ENCODE measurements at regions of chr6 and their contacts with region 1.

Region 1: GRCh38 chr6:125314019-125314581 is 12.3 kb upstream of the HDDC2 start:
- DNase-seq: peak; percentile 51 to 80 (median 77)
- ATAC-seq: peak; percentile 91 to 92
- H3K4me3 ChIP-seq: no peak overlapping the region
- H3K27ac ChIP-seq: no peak overlapping the region
- H3K4me1 ChIP-seq: no peaks in the 10 kb centered on the region
- H3K27me3 ChIP-seq: no peaks in the 10 kb centered on the region

Region 2: DNA sequence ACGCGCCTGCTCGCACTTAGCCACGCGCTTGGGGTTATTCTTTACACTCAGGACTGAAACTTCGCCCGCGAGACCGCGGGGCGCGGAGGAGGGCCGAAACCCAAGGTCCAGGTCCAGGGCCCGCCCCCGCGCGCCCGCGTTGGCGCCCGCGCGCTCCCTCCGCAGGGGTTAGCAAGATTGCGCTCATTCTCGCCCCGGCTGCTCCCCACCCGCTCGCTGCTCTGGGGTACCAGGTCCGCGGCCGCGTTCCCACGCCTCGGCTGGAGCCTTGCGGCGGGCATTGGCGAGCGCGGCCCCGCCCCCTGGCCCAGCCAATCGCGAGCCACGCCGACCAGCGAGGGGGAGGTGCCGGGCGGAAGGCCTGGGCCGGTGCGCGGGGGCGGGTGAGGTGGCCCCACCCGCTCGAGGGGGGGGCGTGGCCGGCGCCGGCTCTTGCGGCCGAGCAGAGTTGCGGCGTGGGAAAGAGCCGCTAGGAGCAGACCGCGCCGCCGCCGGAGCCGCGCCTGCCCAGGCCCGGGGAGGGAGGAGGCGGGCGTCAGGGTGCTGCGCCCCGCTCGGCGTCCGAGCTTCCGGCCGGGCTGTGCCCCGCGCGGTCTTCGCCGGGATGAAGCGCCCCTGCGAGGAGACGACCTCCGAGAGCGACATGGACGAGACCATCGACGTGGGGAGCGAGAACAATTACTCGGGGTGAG is 435.2 kb after region 1 on chr6 and contains the start of gene HEY2:
- intact Hi-C with region 1: loop called (anchors 5 kb)
- DNase-seq: peak; percentile 95 to 98 (median 98)
- ATAC-seq: peak; percentile 97 to 98
- H3K4me3 ChIP-seq: peak within 1 kb of the TSS; percentile 66
- H3K27ac ChIP-seq: peak within 1 kb of the TSS; percentile 78
- H3K4me1 ChIP-seq: no peaks in the 10 kb centered on the region
- H3K27me3 ChIP-seq: no peaks in the 10 kb centered on the region
- total RNA-seq, gene HEY2: 2.6 to 6.0 (median 3.7) TPM

Region 3: GRCh38 chr6:125764121-125764671 is 450.1 kb after region 1 on chr6:
- intact Hi-C with region 1: loop called (anchors 2 to 5 kb)
- DNase-seq: no peak
- ATAC-seq: no peak
- H3K4me3 ChIP-seq: no peak overlapping the region
- H3K27ac ChIP-seq: no peak overlapping the region
- H3K4me1 ChIP-seq: no peaks in the 10 kb centered on the region
- H3K27me3 ChIP-seq: peaks cover 2% of the 10 kb centered on the region

Region 4: GRCh38 chr6:125769147-125769783 is 455.2 kb after region 1 on chr6:
- intact Hi-C with region 1: loop called (anchors 2 to 5 kb)
- DNase-seq: no peak
- ATAC-seq: no peak
- H3K4me3 ChIP-seq: no peak overlapping the region
- H3K27ac ChIP-seq: no peak overlapping the region
- H3K4me1 ChIP-seq: no peaks in the 10 kb centered on the region
- H3K27me3 ChIP-seq: no peaks in the 10 kb centered on the region

Region 5: GRCh38 chr6:125974214-125974866 is 660.2 kb after region 1 on chr6:
- intact Hi-C with region 1: loop called (anchors 5 to 10 kb)
- DNase-seq: no peak
- ATAC-seq: peak; percentile 47 to 61
- H3K4me3 ChIP-seq: no peak overlapping the region
- H3K27ac ChIP-seq: no peak overlapping the region
- H3K4me1 ChIP-seq: no peaks in the 10 kb centered on the region
- H3K27me3 ChIP-seq: no peaks in the 10 kb centered on the region

Measured in right cardiac atrium (tissue), 5 donors.